Activated CD4-positive, alpha-beta memory T cell treated with anti-CD3 and anti-CD28 coated beads for 36 hours (primary cell): ENCODE measurements at regions of chr12 and their contacts with region 1.

Region 1: GRCh38 chr12:113424915-113425823 is 3.0 kb downstream of the SDSL start:
- DNase-seq: peak; percentile 76
- H3K4me3 Mint-ChIP-seq: no peak overlapping the region
- H3K27ac Mint-ChIP-seq: no peak overlapping the region
- H3K4me1 Mint-ChIP-seq: peaks cover 9% of the 10 kb centered on the region
- H3K27me3 Mint-ChIP-seq: peaks cover 7% of the 10 kb centered on the region

Region 2: GRCh38 chr12:112599871-112600270 is 825.3 kb before region 1 on chr12:
- CTCF ChIA-PET with region 1: no interaction called
- POLR2A ChIA-PET with region 1: no interaction called
- intact Hi-C with region 1: no loop called
- DNase-seq: no peak
- H3K4me3 Mint-ChIP-seq: no peak overlapping the region
- H3K27ac Mint-ChIP-seq: no peak overlapping the region
- H3K4me1 Mint-ChIP-seq: no peaks in the 10 kb centered on the region
- H3K27me3 Mint-ChIP-seq: peaks cover 30% of the 10 kb centered on the region

Region 3: GRCh38 chr12:113196996-113197395 is 228.2 kb before region 1 on chr12:
- CTCF ChIA-PET with region 1: interaction called, 11 read pairs
- POLR2A ChIA-PET with region 1: no interaction called
- intact Hi-C with region 1: loop called (anchors 1 kb)
- DNase-seq: peak; percentile 76
- H3K4me3 Mint-ChIP-seq: no peak overlapping the region
- H3K27ac Mint-ChIP-seq: no peak overlapping the region
- H3K4me1 Mint-ChIP-seq: peaks cover 2% of the 10 kb centered on the region
- H3K27me3 Mint-ChIP-seq: no peaks in the 10 kb centered on the region

Region 4: GRCh38 chr12:113310489-113310888 is 114.7 kb before region 1 on chr12:
- CTCF ChIA-PET with region 1: interaction called, 5 read pairs
- POLR2A ChIA-PET with region 1: no interaction called
- intact Hi-C with region 1: loop called (anchors 2 kb)
- DNase-seq: peak; percentile 22
- H3K4me3 Mint-ChIP-seq: no peak overlapping the region
- H3K27ac Mint-ChIP-seq: no peak overlapping the region
- H3K4me1 Mint-ChIP-seq: no peaks in the 10 kb centered on the region
- H3K27me3 Mint-ChIP-seq: no peaks in the 10 kb centered on the region

Region 5: DNA sequence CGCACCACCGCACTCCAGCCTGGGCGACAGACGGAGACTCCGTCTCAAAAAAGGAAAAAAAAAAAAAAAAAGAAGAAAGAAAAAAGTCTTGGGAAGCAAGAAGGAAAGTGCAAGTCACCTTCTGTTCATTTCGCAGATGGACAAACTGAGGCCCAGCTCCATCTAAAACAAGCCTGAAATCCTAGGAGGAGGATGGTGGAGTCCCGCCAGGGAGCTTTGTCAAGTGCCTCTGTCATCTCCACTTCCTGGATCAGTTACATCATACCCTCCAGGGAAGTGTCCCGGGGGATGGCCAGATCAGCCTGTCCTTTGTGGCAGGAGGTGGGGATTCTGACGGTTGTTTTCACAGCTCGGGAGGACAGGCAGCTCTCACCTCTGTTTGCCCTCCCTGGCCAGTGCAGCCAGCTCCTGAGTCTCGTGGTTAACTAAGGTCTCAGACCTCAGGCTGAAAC is 11.7 kb before region 1 on chr12:
- CTCF ChIA-PET with region 1: interaction called, 14 read pairs
- POLR2A ChIA-PET with region 1: no interaction called
- intact Hi-C with region 1: no loop called
- DNase-seq: no peak
- H3K4me3 Mint-ChIP-seq: no peak overlapping the region
- H3K27ac Mint-ChIP-seq: no peak overlapping the region
- H3K4me1 Mint-ChIP-seq: no peaks in the 10 kb centered on the region
- H3K27me3 Mint-ChIP-seq: peaks cover 8% of the 10 kb centered on the region

Region 6: DNA sequence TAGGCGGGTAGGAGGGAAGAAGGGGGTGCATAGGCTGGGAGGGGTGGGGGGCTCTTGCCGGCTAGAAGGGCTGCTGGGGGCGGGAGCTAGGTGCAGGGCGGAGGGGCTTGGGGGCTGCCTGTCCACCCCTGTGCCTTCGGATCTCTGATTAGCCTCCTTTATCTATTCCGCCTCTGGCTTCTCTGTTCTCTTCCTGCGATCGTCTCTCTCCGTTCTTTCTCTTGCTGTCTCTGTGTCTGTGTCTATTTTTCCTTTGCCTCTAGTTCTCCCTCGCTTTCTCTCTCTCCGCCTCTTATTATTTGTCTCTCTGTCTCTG is 213.2 kb after region 1 on chr12:
- CTCF ChIA-PET with region 1: no interaction called
- POLR2A ChIA-PET with region 1: no interaction called
- intact Hi-C with region 1: no loop called
- DNase-seq: no peak
- H3K4me3 Mint-ChIP-seq: no peak overlapping the region
- H3K27ac Mint-ChIP-seq: no peak overlapping the region
- H3K4me1 Mint-ChIP-seq: no peaks in the 10 kb centered on the region
- H3K27me3 Mint-ChIP-seq: peaks cover 21% of the 10 kb centered on the region